MCF 10A (cell line): ENCODE measurements at regions of chr6 and their contacts with region 1.

Region 1: GRCh38 chr6:3518356-3519225 is 61.7 kb upstream of the SLC22A23 start:
- DNase-seq: peak; percentile 99
- H3K4me3 Mint-ChIP-seq: peak overlapping the region; percentile 6
- H3K27ac Mint-ChIP-seq: peak overlapping the region; percentile 44
- H3K4me1 Mint-ChIP-seq: peaks cover 44% of the 10 kb centered on the region
- H3K27me3 Mint-ChIP-seq: no peaks in the 10 kb centered on the region
- CTCF ChIP-seq: no peak

Region 2: DNA sequence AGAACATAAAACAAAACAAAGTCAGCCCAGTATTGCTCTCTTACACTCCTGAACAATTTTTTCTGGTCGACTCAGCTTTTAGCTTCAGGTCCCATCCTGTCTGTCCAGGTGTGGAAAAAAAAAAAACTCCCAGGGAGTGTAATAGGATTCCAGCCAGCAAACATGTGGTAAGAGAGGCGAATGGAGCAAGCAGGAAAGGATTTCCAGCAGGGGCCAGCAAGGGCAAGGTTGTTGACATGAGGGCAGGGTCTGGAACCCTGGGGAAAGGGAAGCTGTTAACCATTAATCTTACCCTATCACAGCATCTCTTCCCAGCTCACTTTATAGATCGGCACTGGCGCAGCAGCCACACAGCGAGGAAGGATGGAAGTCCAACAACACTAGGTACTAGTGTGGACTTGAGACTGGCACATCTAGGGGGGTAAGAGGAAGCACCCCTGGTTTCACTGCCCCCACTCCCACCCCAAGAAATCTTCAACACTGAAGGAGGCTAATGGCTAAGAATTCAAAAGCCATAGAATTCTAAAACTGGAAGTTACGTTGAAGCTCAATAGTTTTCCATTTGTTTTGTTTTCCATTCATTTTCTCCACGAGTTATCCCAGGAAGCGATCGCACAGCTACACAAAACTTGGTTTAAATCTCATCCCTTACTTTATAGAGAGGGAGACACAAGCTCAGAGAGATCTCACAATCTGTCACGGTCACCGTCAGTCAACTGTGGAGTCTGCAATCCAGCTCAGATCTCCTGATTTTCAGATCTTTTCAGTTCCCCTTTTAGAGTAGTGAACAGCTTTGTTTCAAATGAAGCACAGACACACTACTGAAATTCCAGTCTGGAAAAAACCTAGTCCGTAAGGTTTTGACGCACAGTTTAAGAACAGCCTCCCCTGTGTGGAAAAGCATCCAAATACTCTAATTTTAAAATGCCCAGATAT is 115.1 kb before region 1 on chr6:
- CTCF ChIA-PET with region 1: interaction called, 5 read pairs
- POLR2A ChIA-PET with region 1: interaction called, 22 read pairs
- intact Hi-C with region 1: no loop called
- DNase-seq: peak; percentile 72
- H3K4me3 Mint-ChIP-seq: no peak overlapping the region
- H3K27ac Mint-ChIP-seq: peak overlapping the region; percentile 61
- H3K4me1 Mint-ChIP-seq: peaks cover 40% of the 10 kb centered on the region
- H3K27me3 Mint-ChIP-seq: no peaks in the 10 kb centered on the region
- CTCF ChIP-seq: no peak

Region 3: GRCh38 chr6:3456755-3457466 is 61.7 kb before region 1 on chr6 and contains the start of gene SLC22A23:
- CTCF ChIA-PET with region 1: interaction called, 10 read pairs
- POLR2A ChIA-PET with region 1: interaction called, 42 read pairs
- intact Hi-C with region 1: loop called (anchors 5 kb)
- DNase-seq: peak; percentile 69
- H3K4me3 Mint-ChIP-seq: peak within 1 kb of the TSS; percentile 75
- H3K27ac Mint-ChIP-seq: no peak within 1 kb of the TSS
- H3K4me1 Mint-ChIP-seq: peaks cover 7% of the 10 kb centered on the region
- H3K27me3 Mint-ChIP-seq: no peaks in the 10 kb centered on the region
- CTCF ChIP-seq: peak; percentile 79
- total RNA-seq, gene SLC22A23: 11.5 and 11.9 TPM in 2 replicates

Region 4: DNA sequence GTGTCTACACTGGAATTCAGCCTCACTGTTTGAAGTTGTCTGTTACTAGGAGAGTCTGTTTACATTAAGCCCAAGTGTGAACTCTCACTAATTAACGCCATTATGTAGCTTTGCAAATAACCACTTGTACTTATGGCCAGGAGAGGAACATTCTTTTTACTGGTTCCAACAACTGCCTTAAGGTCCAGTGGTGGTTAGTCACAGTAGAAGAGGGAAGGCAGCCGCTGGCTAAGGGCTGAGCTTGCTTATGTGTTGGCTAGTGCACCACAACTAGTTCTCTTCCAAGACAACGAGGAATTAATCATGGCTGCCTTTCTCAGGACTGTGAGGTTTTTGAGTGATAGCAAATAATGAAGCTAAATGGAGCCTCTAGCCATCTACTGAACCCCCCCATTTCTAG is 46.9 kb before region 1 on chr6:
- CTCF ChIA-PET with region 1: interaction called, 3 read pairs
- POLR2A ChIA-PET with region 1: interaction called, 20 read pairs
- intact Hi-C with region 1: no loop called
- DNase-seq: no peak
- H3K4me3 Mint-ChIP-seq: no peak overlapping the region
- H3K27ac Mint-ChIP-seq: no peak overlapping the region
- H3K4me1 Mint-ChIP-seq: peaks cover 12% of the 10 kb centered on the region
- H3K27me3 Mint-ChIP-seq: no peaks in the 10 kb centered on the region
- CTCF ChIP-seq: no peak

Region 5: DNA sequence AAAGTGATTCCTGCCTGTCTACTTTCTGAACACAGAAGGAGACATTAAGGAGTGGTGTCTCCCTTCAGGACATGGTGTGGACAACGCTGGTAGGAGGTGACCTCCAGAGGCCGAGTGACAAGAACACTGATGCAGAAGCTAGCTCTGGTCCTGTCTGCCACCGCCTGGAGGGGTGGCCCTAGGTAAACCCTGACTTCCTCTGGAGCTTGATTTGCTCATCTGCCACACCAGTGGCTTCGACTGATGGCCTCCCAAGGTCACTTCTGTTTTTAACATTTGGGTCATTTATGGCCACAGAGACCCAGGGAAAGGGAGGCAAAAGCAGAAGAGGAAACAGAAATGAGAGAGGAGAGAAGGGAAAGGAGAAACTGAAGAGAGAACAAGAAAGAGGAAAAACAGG is 12.4 kb before region 1 on chr6:
- CTCF ChIA-PET with region 1: interaction called, 5 read pairs
- POLR2A ChIA-PET with region 1: interaction called, 127 read pairs
- intact Hi-C with region 1: no loop called
- DNase-seq: no peak
- H3K4me3 Mint-ChIP-seq: no peak overlapping the region
- H3K27ac Mint-ChIP-seq: peak overlapping the region; percentile 88
- H3K4me1 Mint-ChIP-seq: peaks cover 22% of the 10 kb centered on the region
- H3K27me3 Mint-ChIP-seq: no peaks in the 10 kb centered on the region
- CTCF ChIP-seq: no peak

Region 6: GRCh38 chr6:3612341-3613041 is 93.9 kb after region 1 on chr6:
- CTCF ChIA-PET with region 1: no interaction called
- POLR2A ChIA-PET with region 1: interaction called, 46 read pairs
- intact Hi-C with region 1: loop called (anchors 5 kb)
- DNase-seq: peak; percentile 98
- H3K4me3 Mint-ChIP-seq: peak overlapping the region; percentile 28
- H3K27ac Mint-ChIP-seq: peak overlapping the region; percentile 36
- H3K4me1 Mint-ChIP-seq: peaks cover 21% of the 10 kb centered on the region
- H3K27me3 Mint-ChIP-seq: no peaks in the 10 kb centered on the region
- CTCF ChIP-seq: no peak

Region 7: DNA sequence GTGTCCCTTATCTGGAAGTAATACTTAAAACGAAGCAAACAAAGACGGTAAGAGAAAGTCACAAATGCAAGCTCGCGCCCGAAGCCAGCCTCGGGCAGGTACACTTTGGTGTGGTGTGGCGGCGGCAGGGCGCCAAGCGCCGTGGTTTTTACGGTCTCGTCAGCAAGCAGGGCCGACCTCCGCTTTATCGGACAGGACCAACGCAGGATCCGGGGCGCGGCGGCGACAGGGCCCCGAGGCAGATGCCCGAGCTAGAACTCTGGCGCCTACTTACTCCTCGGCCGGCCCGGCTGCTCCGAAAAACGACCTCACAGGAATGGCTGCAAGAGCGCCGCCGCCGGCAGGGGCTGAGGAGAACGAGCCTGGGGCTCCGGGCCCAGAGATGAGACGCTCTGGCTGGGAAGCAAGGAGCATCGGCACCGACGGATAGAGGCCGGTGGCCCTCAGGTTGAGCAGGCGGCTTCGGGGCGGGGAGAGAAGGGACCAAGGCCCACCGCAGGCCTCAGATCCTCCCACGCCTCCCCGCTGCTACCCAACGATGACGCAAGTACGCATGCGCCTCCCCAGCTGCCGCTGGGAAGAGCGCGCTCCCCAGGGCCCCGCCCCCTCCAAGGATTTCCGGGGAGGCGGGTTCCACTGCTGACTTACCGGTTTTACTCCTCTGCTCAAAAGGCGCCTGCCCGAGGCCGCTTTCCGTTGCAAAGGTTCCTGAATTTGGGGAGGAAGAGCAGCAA is 499.7 kb after region 1 on chr6:
- CTCF ChIA-PET with region 1: no interaction called
- POLR2A ChIA-PET with region 1: interaction called, 10 read pairs
- intact Hi-C with region 1: no loop called
- DNase-seq: peak; percentile 97
- H3K4me3 Mint-ChIP-seq: peak overlapping the region; percentile 96
- H3K27ac Mint-ChIP-seq: peak overlapping the region; percentile 97
- H3K4me1 Mint-ChIP-seq: peaks cover 42% of the 10 kb centered on the region
- H3K27me3 Mint-ChIP-seq: no peaks in the 10 kb centered on the region
- CTCF ChIP-seq: peak; percentile 39